Panc1 (cell line): ENCODE measurements at regions of chr20 and their contacts with region 1.

Region 1: GRCh38 chr20:44092551-44093248 is 94.3 kb downstream of the JPH2 start:
- DNase-seq: no peak
- ATAC-seq: peak; percentile 70; the same call in 1 of the 2 replicates
- H3K4me3 ChIP-seq: no peak overlapping the region
- H3K27ac ChIP-seq: no peak overlapping the region
- H3K4me1 ChIP-seq: no peaks in the 10 kb centered on the region
- H3K27me3 ChIP-seq: no peaks in the 10 kb centered on the region
- CTCF ChIP-seq: peak; percentile 78

Region 2: GRCh38 chr20:43666376-43667328 is 426.0 kb before region 1 on chr20 and contains the start of gene MYBL2:
- CTCF ChIA-PET with region 1: no interaction called
- POLR2A ChIA-PET with region 1: interaction called, 11 read pairs
- in situ Hi-C with region 1: no loop called
- intact Hi-C with region 1: no loop called
- DNase-seq: no peak
- ATAC-seq: peak; percentile 95
- H3K4me3 ChIP-seq: peak within 1 kb of the TSS; percentile 60 to 73
- H3K27ac ChIP-seq: peak within 1 kb of the TSS; percentile 74
- H3K4me1 ChIP-seq: peaks cover 21% of the 10 kb centered on the region; the same call in 1 of the 2 replicates
- H3K27me3 ChIP-seq: no peaks in the 10 kb centered on the region
- CTCF ChIP-seq: no peak
- total RNA-seq, gene MYBL2: 138 TPM

Region 3: DNA sequence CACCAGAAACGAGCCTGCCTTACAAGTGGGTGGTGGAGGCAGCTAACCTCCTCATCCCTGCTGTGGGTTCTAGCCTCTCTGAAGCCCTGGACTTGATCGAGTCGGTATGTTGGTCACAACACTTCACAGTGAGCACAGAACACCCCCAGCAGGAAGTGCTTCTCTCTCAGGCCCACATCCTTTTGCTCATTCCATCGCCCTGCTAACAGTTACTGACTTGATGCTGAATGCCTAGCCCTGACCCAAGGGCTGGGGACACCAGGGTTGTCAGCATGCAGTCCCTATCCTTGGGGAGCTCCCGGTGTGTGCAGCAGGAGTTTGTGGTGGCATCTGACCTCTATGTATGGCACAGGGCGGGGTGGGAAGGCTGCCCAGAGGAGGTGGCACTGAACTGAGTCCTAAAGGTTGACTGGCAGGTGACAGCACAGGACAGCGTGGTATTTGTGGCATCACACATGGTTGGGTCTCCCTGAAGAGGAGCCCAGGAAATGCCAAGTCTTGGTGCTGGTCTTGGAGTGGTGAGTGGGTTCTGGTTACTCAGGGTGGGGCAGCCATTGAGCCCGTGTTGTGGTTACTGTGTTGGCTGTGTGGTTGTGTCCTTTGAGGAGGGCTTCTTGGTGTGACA is 392.6 kb before region 1 on chr20:
- CTCF ChIA-PET with region 1: interaction called, 10 read pairs
- POLR2A ChIA-PET with region 1: no interaction called
- in situ Hi-C with region 1: no loop called
- intact Hi-C with region 1: no loop called
- DNase-seq: no peak
- ATAC-seq: no peak
- H3K4me3 ChIP-seq: no peak overlapping the region
- H3K27ac ChIP-seq: no peak overlapping the region
- H3K4me1 ChIP-seq: no peaks in the 10 kb centered on the region
- H3K27me3 ChIP-seq: no peaks in the 10 kb centered on the region
- CTCF ChIP-seq: no peak